ENCODE measurements at regions of chr16 and their contacts with region 1.

Region 1: DNA sequence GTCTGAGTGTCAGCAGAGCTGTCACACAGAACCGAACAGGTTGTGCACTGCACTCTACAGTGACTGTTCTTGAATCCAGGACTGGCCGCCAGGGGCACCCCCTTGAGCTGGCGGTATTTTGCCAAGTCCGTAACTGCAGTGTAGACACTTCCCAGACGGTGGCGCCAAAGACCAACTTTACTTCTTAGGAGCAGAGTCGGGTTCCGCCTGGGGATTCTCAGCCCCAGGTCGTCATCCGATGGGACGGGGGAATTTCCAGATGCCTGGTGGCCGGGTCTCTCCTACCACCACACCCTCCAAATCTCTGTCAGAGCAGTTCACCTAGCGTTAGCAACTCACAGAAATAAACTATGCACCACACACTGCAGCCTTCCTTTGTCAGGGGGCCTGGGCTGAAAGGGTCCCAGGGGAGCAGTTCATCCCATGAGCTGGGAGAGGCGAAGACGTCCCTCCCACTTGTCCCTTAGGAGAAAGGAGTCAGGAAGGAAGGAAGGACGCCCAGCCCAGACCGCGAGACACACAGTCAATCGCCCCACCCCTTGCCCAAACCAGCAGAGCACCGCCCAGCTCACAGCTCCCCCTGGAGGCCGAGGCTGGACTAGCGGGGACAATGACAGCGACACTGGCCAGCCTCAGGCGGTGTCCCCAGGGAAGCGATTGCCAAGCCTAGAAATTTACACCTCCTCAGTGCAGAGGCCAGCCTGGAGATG is 7.4 kb upstream of the RIPOR1 start:
- DNase-seq: peak; percentile 99
- ATAC-seq: peak; percentile 91
- H3K4me3 Mint-ChIP-seq: peak overlapping the region; percentile 81
- H3K27ac Mint-ChIP-seq: peak overlapping the region; percentile 96
- H3K4me1 Mint-ChIP-seq: peaks cover 36% of the 10 kb centered on the region
- H3K27me3 Mint-ChIP-seq: peaks cover 7% of the 10 kb centered on the region

Region 2: DNA sequence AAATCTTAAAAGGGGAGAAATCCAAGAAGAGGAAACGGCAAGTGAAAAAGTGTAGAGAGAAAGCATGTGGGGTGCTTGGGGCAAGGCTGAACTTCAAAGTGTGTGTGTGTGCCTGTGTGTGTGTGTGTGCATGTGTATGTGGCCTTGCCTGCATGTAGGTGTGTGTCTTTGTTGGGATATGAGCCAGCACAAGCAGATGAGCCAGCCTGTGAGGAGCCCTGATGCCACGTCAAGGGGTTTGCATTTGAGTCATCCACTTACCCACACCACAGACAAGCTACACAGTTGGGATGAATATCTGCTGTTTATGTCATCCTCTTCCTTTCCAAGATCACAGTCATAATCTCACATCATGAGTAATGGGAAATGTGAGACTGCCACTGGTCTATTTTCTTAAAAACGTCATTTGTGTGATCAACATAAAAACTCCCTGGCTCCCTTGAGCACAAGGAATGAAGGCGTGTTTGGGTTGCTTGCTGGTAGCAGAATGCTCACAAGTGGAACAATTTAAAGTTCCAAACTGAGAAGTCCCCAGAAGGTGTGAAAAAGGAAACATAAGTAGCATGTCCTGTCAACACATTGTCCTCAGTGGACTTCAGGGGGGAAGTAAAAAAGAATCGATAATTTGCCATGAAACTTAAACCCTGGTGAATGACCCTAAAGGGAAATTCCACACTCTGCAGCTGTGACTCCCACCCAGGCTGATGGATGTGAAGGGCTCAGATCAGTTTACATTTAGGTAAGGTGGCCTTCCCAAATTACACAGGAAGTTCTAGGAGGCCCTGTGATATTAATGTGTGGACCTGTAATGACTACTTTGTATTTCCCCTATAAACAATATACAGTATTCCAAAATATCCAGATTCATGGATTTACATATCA is 209.4 kb before region 1 on chr16:
- CTCF ChIA-PET with region 1: no interaction called
- DNase-seq: peak; percentile 94
- ATAC-seq: peak; percentile 97
- H3K4me3 Mint-ChIP-seq: no peak overlapping the region
- H3K27ac Mint-ChIP-seq: peak overlapping the region; percentile 78
- H3K4me1 Mint-ChIP-seq: peaks cover 28% of the 10 kb centered on the region
- H3K27me3 Mint-ChIP-seq: no peaks in the 10 kb centered on the region

Region 3: GRCh38 chr16:67428146-67428731 is 93.0 kb before region 1 on chr16:
- CTCF ChIA-PET with region 1: interaction called, 10 read pairs
- DNase-seq: peak; percentile 71
- ATAC-seq: peak; percentile 72
- H3K4me3 Mint-ChIP-seq: no peak overlapping the region
- H3K27ac Mint-ChIP-seq: no peak overlapping the region
- H3K4me1 Mint-ChIP-seq: peaks cover 7% of the 10 kb centered on the region
- H3K27me3 Mint-ChIP-seq: peaks cover 68% of the 10 kb centered on the region

Region 4: GRCh38 chr16:67504041-67505021 is 16.9 kb before region 1 on chr16:
- CTCF ChIA-PET with region 1: interaction called, 732 read pairs
- DNase-seq: peak; percentile 89
- ATAC-seq: peak; percentile 98
- H3K4me3 Mint-ChIP-seq: no peak overlapping the region
- H3K27ac Mint-ChIP-seq: peak overlapping the region; percentile 83
- H3K4me1 Mint-ChIP-seq: peaks cover 42% of the 10 kb centered on the region
- H3K27me3 Mint-ChIP-seq: no peaks in the 10 kb centered on the region

Region 5: GRCh38 chr16:67555795-67556212 is 34.6 kb after region 1 on chr16:
- CTCF ChIA-PET with region 1: interaction called, 28 read pairs
- DNase-seq: no peak
- ATAC-seq: peak; percentile 94
- H3K4me3 Mint-ChIP-seq: peak overlapping the region; percentile 33
- H3K27ac Mint-ChIP-seq: peak overlapping the region; percentile 98
- H3K4me1 Mint-ChIP-seq: peaks cover 53% of the 10 kb centered on the region
- H3K27me3 Mint-ChIP-seq: no peaks in the 10 kb centered on the region

Region 6: DNA sequence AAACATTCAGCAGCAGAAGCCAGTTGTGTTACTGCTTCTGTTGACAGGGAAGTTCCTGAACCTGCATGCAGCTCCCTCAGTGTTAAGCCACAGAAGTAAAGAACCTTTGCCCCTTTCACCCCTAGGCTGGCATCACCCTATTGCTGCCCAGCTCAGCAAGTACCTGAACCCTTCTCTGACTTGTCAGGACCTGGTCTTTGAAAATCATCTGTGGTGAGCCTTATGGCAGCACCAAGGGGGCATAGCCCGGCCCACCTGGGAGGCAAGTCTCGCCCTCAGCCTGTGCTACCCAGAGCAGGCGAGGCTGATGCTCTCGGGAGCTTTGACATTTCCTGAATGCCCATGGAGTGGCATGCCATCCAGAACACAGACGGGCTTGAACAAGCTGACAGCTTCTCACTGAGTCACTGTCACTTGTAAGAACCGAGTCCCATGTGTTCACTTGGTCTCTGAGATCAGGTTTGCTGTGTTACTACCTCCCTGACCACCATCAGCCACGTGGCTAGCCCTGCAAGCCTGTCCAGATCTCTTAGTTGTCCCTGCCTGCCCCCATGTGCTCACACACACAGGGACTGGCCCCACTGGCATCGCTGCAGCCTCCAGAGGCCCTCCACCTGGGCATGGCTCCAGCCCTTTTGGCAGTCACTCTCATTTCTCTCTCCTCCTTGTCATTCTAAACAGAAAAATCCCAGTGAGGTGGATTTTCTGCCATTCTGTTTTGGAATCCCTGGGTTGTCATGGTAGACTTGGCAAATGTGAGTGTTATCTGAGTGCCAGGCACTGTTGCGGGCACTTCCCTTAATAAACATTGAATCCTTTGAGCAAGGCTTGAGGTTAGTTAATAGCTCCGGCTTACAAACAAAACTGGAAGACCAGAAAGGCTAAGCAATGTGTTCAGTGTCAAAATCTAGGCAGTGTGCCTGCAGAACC is 120.8 kb after region 1 on chr16:
- CTCF ChIA-PET with region 1: interaction called, 115 read pairs
- DNase-seq: no peak
- ATAC-seq: no peak
- H3K4me3 Mint-ChIP-seq: no peak overlapping the region
- H3K27ac Mint-ChIP-seq: no peak overlapping the region
- H3K4me1 Mint-ChIP-seq: peaks cover 15% of the 10 kb centered on the region
- H3K27me3 Mint-ChIP-seq: no peaks in the 10 kb centered on the region

Region 7: DNA sequence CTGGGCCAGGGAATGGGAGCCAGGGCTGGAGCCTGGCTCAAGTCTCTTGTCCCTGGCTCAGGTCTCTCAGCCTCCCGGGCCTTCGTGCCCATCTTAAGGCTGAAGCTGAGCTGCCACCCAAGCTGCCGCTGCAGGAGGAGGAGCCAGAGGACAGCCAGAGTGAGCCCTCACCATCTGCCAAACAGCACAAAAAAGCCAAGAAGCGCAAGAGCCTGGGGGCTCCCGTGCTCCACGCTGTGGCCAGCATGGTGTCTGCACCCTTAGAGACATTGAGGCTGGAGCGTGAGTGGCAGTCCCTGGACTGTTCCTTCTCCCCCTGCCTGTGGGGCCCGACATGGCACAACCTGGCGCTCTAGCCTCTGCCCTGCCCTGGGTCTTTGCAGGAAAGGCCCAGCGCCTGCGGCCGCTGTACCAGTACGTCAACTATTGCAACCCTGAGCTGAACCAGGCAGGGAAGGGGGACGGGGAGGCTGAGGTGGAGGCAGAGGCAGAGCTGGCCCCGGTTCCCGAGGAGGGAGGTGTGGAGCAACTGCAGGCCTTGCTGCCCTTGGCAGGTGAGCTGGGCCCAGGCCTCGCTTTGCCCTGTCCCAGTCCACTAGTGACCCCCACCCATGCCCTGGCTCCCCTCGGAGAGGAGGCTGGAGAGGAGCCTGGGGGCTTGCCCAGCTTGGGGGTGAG is 146.7 kb after region 1 on chr16:
- CTCF ChIA-PET with region 1: interaction called, 199 read pairs
- DNase-seq: peak; percentile 90
- ATAC-seq: peak; percentile 81
- H3K4me3 Mint-ChIP-seq: no peak overlapping the region
- H3K27ac Mint-ChIP-seq: no peak overlapping the region
- H3K4me1 Mint-ChIP-seq: peaks cover 12% of the 10 kb centered on the region
- H3K27me3 Mint-ChIP-seq: no peaks in the 10 kb centered on the region

Region 8: DNA sequence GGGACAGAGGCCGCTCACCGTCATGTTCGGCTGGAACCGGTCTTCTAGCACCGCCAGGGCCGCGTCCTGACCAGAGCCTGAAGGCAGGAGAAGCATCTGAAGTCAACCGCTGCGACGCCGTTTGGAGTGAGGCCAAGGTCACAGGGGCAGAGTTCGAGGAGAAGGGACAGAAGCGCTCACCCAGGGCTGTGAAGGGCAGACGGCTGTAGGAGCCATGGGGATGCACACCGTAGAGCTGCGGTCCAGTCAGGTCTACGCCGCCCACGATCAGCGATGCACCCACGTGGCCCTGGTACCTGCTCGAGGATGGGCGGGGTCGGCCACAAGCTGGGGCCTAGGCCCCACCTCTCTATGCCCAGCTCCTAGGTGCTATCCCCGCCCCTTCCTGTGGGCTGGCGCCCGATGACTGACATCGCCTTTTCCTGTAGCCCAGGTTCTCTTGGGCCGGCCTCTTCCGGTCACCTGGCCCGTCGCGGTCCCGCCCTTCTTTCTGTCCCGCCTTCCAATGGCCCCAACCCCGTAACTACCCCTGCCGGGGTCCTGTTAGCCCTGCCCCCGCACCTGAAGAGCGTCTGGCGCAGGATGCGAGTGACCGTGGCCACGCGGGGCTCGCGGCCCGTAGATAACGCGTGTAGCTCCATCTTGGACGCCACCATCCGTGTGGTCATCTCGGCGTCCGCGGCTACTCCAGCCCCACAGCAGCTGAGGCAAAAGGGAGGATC is 414.3 kb after region 1 on chr16:
- CTCF ChIA-PET with region 1: interaction called, 12 read pairs
- DNase-seq: peak; percentile 98
- ATAC-seq: peak; percentile 88
- H3K4me3 Mint-ChIP-seq: peak overlapping the region; percentile 99
- H3K27ac Mint-ChIP-seq: peak overlapping the region; percentile 98
- H3K4me1 Mint-ChIP-seq: peaks cover 37% of the 10 kb centered on the region
- H3K27me3 Mint-ChIP-seq: no peaks in the 10 kb centered on the region

Measured in activated CD8-positive, alpha-beta memory T cell treated with anti-CD3 and anti-CD28 coated beads, Interleukin-2, amount 10 ng/mL, durations not matched to agents 7 days and 5 days (primary cell).